A549 (cell line): ENCODE measurements at regions of chr1 and their contacts with region 1.

Region 1: GRCh38 chr1:150053926-150054325 is 13.7 kb upstream of the VPS45 start:
- DNase-seq: no peak
- ATAC-seq: no peak
- H3K4me3 ChIP-seq: no peak overlapping the region
- H3K27ac ChIP-seq: no peak overlapping the region
- H3K4me1 ChIP-seq: 0 out of 3 replicates have a peak, but pooled peaks cover 3% of the 10 kb centered on the region
- CTCF ChIP-seq: no peak
- EP300 ChIP-seq: no peak
- POLR2A ChIP-seq: no peak
- RAD21 ChIP-seq: no peak

Region 2: GRCh38 chr1:150010393-150011115 is 43.4 kb before region 1 on chr1 and contains the start of gene OTUD7B:
- CTCF ChIA-PET with region 1: interaction called, 16 read pairs
- POLR2A ChIA-PET with region 1: no interaction called
- DNase-seq: peak; percentile 69 to 89
- ATAC-seq: peak; percentile 93 to 94
- H3K4me3 ChIP-seq: peak within 1 kb of the TSS; percentile 59
- H3K27ac ChIP-seq: peak within 1 kb of the TSS; percentile 88 to 96
- H3K4me1 ChIP-seq: peaks cover 29% of the 10 kb centered on the region
- CTCF ChIP-seq: no peak; the same call in 2 of the 3 replicates
- EP300 ChIP-seq: no peak
- POLR2A ChIP-seq: peak; percentile 72
- RAD21 ChIP-seq: peak in 1 of 2 experiments; percentile 25; a peak in 2 of 5 replicates
- polyA plus RNA-seq, gene OTUD7B: 12.1 and 13.0 TPM in 2 replicates

Region 3: GRCh38 chr1:150034336-150034735 is 19.6 kb before region 1 on chr1:
- CTCF ChIA-PET with region 1: interaction called, 15 read pairs
- POLR2A ChIA-PET with region 1: no interaction called
- DNase-seq: no peak
- ATAC-seq: no peak
- H3K4me3 ChIP-seq: no peak overlapping the region
- H3K27ac ChIP-seq: no peak overlapping the region
- H3K4me1 ChIP-seq: no peaks in the 10 kb centered on the region
- CTCF ChIP-seq: no peak
- EP300 ChIP-seq: no peak
- POLR2A ChIP-seq: no peak
- RAD21 ChIP-seq: no peak

Region 4: DNA sequence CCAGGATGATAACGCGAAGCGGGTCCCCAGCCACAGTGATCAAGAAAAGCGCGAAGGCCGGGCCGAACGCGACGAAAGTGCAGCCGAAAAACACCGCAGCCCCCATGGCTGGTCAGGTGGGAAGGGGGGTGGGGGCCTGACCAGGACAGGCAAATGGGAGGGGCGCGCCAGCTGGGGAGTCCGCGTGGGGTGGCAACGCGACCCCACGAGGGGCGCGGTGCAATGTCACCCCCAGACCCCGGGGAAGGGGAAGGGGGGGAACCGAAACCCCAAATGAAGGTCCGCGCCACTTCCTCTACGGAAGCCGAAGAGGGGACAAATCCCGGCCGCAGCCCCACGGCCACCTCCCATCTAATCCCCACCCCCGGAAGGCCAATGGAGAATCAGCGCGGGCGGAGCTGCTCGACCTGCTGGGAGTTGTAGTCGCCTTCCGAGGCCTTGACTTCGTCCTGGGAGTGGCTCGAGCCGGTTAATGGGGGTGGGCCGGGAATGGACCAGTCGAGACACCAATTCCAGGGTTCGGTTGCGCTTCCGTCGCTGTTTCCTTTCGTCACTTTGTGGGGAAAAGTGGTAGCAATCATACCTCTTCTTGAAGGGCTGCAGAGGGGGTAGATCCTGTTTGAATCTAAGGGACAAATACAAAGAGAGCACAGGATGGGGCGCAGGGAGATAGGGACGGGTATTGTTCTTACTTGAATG is 214.9 kb after region 1 on chr1 and contains the start of gene APH1A:
- CTCF ChIA-PET with region 1: no interaction called
- POLR2A ChIA-PET with region 1: no interaction called
- DNase-seq: peak; percentile 97 to 99
- ATAC-seq: peak; percentile 98 to 100
- H3K4me3 ChIP-seq: peak within 1 kb of the TSS; percentile 91
- H3K27ac ChIP-seq: peak within 1 kb of the TSS; percentile 94
- H3K4me1 ChIP-seq: peaks cover 11% of the 10 kb centered on the region
- CTCF ChIP-seq: no peak
- EP300 ChIP-seq: no peak
- POLR2A ChIP-seq: no peak
- RAD21 ChIP-seq: no peak
- polyA plus RNA-seq, gene APH1A: 118 and 119 TPM in 2 replicates

Region 5: DNA sequence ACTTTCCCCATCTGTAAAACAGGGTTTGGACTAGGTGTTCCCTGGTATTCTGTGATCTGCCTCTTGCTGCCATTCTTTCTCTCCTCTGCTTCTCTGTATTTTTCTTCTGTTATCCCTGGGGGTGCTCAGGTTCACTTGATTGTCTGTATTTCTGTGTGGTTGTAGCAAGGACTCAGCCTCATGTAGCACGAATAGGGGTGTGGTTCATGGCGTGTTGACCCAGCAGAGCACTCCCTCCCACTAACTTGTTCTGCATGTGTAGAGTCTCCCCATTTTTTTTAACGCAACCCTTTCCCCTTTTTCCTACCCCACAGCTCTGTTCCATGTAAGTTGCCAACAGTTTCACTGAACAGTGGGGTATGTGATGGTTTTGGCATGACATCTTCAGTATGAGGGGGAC is 981.2 kb after region 1 on chr1:
- CTCF ChIA-PET with region 1: no interaction called
- POLR2A ChIA-PET with region 1: no interaction called
- DNase-seq: no peak
- ATAC-seq: no peak
- H3K4me3 ChIP-seq: no peak overlapping the region
- H3K27ac ChIP-seq: no peak overlapping the region
- H3K4me1 ChIP-seq: no peaks in the 10 kb centered on the region
- CTCF ChIP-seq: no peak
- EP300 ChIP-seq: no peak
- POLR2A ChIP-seq: no peak
- RAD21 ChIP-seq: no peak